ENCODE measurements at regions of chr5 and their contacts with region 1.

Region 1: DNA sequence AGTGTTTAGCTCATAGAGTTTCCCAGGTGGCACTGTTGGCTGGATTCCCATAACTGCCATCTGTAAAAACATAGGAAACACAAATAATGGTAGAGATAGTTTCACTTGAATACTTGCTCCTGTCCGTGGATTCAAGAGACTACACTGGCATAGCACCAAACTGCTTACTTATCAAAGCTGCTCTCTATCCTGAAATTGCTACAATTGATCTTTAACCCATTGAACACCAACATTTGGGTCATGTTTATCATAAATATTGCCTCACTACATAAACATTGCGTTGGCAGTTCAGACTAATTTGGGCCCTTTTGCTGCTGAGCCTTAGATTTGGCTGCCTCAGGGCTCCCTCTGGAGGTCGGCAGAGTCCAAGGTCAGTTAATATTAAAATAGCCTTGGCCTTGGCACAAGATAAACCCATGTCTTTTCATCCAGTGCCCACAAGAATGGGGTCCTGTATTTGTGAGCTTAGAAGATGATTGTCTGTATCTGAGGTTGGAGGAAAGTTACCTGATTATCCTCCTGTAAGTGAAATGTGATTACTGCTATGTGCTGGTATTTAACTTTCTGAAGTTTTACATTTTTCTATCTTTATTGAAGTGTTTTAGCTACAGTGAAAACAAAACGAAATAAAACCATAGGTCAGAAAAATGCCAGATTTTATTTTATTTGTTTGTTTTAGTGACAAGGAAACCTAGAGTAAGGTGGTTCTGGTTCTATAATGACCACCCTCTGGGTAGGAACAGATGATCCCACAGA is 4.0 kb upstream of the RANBP3L start:
- DNase-seq: peak in 5 of 14 experiments; percentile 4 to 34 (median 13)
- ATAC-seq: no peak
- H3K4me3 ChIP-seq: no peak overlapping the region
- H3K4me3 Mint-ChIP-seq: no peak overlapping the region
- H3K27ac ChIP-seq: no peak overlapping the region
- H3K27ac Mint-ChIP-seq: no peak overlapping the region
- H3K4me1 ChIP-seq: no peaks in the 10 kb centered on the region
- H3K4me1 Mint-ChIP-seq: peaks cover 12% of the 10 kb centered on the region
- H3K27me3 ChIP-seq: no peaks in the 10 kb centered on the region
- H3K27me3 Mint-ChIP-seq: peaks cover 7% of the 10 kb centered on the region
- CTCF ChIP-seq: no peak

Region 2: DNA sequence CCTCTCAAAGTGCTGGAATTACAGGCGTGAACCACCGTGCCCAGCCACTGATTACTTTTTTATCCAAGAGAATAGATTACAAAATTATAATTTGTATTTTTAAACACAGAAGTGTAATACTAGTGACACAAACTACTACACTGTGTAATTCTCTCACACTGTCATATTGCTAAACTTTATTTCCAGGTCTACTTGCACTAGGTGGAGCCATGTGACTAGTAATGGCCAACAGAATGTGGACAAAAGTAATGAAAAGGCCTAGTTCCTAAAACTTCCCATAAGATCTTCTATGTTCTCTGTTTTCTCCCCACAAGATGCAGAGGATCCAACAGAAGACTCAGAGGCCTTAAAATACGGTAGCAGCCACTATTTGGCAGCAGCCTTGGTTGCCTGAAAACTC is 91.3 kb before region 1 on chr5:
- CTCF ChIA-PET with region 1: no interaction called
- POLR2A ChIA-PET with region 1: no interaction called
- intact Hi-C with region 1: loop called in 1 of 2 experiments (anchors 10 kb)
- DNase-seq: peak in 2 of 14 experiments; percentile 9
- ATAC-seq: no peak
- H3K4me3 ChIP-seq: no peak overlapping the region
- H3K4me3 Mint-ChIP-seq: no peak overlapping the region
- H3K27ac ChIP-seq: no peak overlapping the region
- H3K27ac Mint-ChIP-seq: no peak overlapping the region
- H3K4me1 ChIP-seq: no peaks in the 10 kb centered on the region
- H3K4me1 Mint-ChIP-seq: no peaks in the 10 kb centered on the region
- H3K27me3 ChIP-seq: no peaks in the 10 kb centered on the region
- H3K27me3 Mint-ChIP-seq: no peaks in the 10 kb centered on the region
- CTCF ChIP-seq: peak; percentile 35

Measured in CD4-positive, alpha-beta T cell (primary cell).